Activated CD4-positive, alpha-beta T cell treated with anti-CD3 and anti-CD28 coated beads for 36 hours (primary cell): ENCODE measurements at regions of chr1 and their contacts with region 1.

Region 1: DNA sequence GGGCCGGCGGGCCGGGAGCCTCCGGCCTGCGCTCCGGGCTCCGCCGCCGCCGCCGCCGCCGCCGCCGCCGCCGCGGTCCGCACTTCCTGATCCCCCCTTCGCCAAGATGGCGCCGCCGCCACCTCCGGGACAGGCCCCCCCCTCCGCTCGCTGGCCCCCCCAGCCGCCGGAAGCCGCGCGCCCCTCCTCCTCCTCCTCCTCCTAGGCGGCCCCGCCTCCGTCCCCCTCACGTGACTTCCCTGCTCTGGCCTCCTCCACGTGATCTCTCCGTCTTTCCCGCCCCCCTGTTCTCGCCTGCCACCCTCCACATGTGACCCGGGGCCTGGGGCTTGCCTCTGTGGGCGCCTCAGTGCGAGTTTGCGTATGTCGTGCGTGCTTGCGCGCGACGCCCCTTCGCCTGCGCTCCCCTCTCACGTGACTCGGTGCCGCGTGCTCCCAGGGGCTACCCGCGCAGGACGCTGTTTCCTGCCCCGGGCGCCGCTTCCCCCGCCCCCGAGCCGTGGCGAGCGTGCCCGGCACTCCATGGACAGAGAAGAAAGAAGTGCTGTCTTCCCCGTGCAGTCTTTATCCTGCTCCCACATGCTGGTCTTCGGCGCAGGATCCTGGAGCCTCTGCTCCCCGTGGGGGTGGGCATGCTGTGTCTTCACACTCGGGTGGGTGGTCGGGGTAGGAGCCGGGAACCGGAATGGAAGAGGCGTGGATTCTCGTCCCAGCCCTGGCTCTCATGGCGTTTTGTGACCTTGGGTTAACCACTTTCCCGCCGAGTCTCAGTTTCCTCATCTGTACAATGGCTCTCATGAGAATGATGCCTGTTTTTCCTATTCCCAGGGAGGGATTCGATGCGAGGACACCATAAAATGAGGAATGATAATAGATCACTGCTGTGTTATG is at the start of gene UBE2Q1:
- DNase-seq: peak; percentile 100
- ATAC-seq: peak; percentile 95
- H3K4me3 Mint-ChIP-seq: peak within 1 kb of the TSS; percentile 93
- H3K27ac Mint-ChIP-seq: peak within 1 kb of the TSS; percentile 96
- H3K4me1 Mint-ChIP-seq: peaks cover 20% of the 10 kb centered on the region
- H3K27me3 Mint-ChIP-seq: no peaks in the 10 kb centered on the region
- total RNA-seq, gene UBE2Q1: 89.3 to 101 TPM

Region 2: GRCh38 chr1:153775458-153776327 is 783.1 kb before region 1 on chr1:
- CTCF ChIA-PET with region 1: no interaction called
- POLR2A ChIA-PET with region 1: no interaction called
- intact Hi-C with region 1: no loop called
- DNase-seq: peak; percentile 76
- ATAC-seq: peak; percentile 73
- H3K4me3 Mint-ChIP-seq: peak overlapping the region; percentile 69
- H3K27ac Mint-ChIP-seq: no peak overlapping the region
- H3K4me1 Mint-ChIP-seq: peaks cover 14% of the 10 kb centered on the region
- H3K27me3 Mint-ChIP-seq: no peaks in the 10 kb centered on the region

Region 3: GRCh38 chr1:154324669-154325582 is 233.9 kb before region 1 on chr1 and contains the start of gene ATP8B2:
- CTCF ChIA-PET with region 1: no interaction called
- POLR2A ChIA-PET with region 1: no interaction called
- intact Hi-C with region 1: loop called in 1 of 2 experiments (anchors 1 kb)
- DNase-seq: peak; percentile 92
- ATAC-seq: peak; percentile 70
- H3K4me3 Mint-ChIP-seq: peak within 1 kb of the TSS; percentile 99
- H3K27ac Mint-ChIP-seq: peak within 1 kb of the TSS; percentile 94
- H3K4me1 Mint-ChIP-seq: peaks cover 39% of the 10 kb centered on the region
- H3K27me3 Mint-ChIP-seq: no peaks in the 10 kb centered on the region
- total RNA-seq, gene ATP8B2: 48.2 TPM

Region 4: GRCh38 chr1:154627257-154628120 is 68.7 kb after region 1 on chr1:
- CTCF ChIA-PET with region 1: interaction called, 5 read pairs
- POLR2A ChIA-PET with region 1: no interaction called
- intact Hi-C with region 1: loop called (anchors 1 kb)
- DNase-seq: peak; percentile 96
- ATAC-seq: peak; percentile 74
- H3K4me3 Mint-ChIP-seq: peak overlapping the region; percentile 99
- H3K27ac Mint-ChIP-seq: peak overlapping the region; percentile 100
- H3K4me1 Mint-ChIP-seq: peaks cover 47% of the 10 kb centered on the region
- H3K27me3 Mint-ChIP-seq: peaks cover 1% of the 10 kb centered on the region

Region 5: GRCh38 chr1:154760469-154760933 is 201.7 kb after region 1 on chr1:
- CTCF ChIA-PET with region 1: interaction called, 12 read pairs
- POLR2A ChIA-PET with region 1: no interaction called
- intact Hi-C with region 1: loop called (anchors 1 to 5 kb)
- DNase-seq: peak; percentile 90
- ATAC-seq: peak; percentile 57
- H3K4me3 Mint-ChIP-seq: peak overlapping the region; percentile 69
- H3K27ac Mint-ChIP-seq: peak overlapping the region; percentile 97
- H3K4me1 Mint-ChIP-seq: peaks cover 51% of the 10 kb centered on the region
- H3K27me3 Mint-ChIP-seq: no peaks in the 10 kb centered on the region

Region 6: DNA sequence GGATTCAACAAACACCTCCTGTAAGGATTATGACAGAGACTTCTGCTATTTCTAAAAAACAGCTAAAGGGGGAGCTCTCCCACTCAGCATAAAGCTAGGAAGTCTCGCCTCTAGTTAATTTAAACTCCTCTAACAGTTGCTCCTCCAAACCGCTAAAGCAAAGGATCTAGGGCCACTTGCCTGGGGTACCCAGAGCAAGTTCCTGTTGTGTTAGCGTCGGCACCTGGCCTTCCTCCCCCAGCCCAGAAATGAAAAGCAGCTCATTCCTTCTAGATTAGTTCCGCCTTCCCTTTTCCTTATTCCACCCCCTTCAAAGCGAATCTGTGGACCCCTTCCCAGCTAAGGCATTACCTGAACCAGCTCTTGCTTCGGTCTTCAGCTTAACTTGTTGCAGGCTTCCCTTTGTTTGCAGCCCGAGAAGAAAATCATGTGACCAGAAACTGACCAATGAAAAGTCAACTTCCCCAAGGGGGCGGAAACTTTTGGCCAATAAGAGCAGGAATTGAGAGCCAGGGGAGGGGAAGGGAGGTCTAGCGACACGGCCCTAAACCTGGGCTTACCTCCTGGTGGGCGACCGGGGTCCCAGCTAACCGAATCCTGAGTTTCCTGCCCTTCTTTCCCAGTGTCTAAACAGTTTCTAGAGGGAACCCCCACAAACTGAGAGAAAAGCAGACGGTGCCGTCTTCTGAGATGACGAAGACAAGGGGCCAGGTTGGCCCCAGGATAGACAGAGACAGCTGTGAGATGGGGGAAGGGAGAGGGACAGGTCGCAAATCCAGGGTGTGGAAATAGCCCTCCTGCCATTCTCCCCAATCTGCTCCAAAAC is 397.1 kb after region 1 on chr1 and contains the start of gene PBXIP1:
- CTCF ChIA-PET with region 1: interaction called, 5 read pairs
- POLR2A ChIA-PET with region 1: no interaction called
- intact Hi-C with region 1: loop called in 1 of 2 experiments (anchors 5 kb)
- DNase-seq: peak; percentile 83
- ATAC-seq: peak; percentile 54
- H3K4me3 Mint-ChIP-seq: peak within 1 kb of the TSS; percentile 85
- H3K27ac Mint-ChIP-seq: peak within 1 kb of the TSS; percentile 95
- H3K4me1 Mint-ChIP-seq: peaks cover 82% of the 10 kb centered on the region
- H3K27me3 Mint-ChIP-seq: no peaks in the 10 kb centered on the region
- total RNA-seq, gene PBXIP1: 22.6 to 28.1 TPM

Region 7: GRCh38 chr1:155084722-155085503 is 526.1 kb after region 1 on chr1:
- CTCF ChIA-PET with region 1: interaction called, 12 read pairs
- POLR2A ChIA-PET with region 1: no interaction called
- intact Hi-C with region 1: loop called in 1 of 2 experiments (anchors 1 kb)
- DNase-seq: peak; percentile 97
- ATAC-seq: peak; percentile 78
- H3K4me3 Mint-ChIP-seq: peak overlapping the region; percentile 82
- H3K27ac Mint-ChIP-seq: peak overlapping the region; percentile 91
- H3K4me1 Mint-ChIP-seq: peaks cover 36% of the 10 kb centered on the region
- H3K27me3 Mint-ChIP-seq: peaks cover 27% of the 10 kb centered on the region